ENCODE measurements at regions of chr7 and their contacts with region 1.

Region 1: DNA sequence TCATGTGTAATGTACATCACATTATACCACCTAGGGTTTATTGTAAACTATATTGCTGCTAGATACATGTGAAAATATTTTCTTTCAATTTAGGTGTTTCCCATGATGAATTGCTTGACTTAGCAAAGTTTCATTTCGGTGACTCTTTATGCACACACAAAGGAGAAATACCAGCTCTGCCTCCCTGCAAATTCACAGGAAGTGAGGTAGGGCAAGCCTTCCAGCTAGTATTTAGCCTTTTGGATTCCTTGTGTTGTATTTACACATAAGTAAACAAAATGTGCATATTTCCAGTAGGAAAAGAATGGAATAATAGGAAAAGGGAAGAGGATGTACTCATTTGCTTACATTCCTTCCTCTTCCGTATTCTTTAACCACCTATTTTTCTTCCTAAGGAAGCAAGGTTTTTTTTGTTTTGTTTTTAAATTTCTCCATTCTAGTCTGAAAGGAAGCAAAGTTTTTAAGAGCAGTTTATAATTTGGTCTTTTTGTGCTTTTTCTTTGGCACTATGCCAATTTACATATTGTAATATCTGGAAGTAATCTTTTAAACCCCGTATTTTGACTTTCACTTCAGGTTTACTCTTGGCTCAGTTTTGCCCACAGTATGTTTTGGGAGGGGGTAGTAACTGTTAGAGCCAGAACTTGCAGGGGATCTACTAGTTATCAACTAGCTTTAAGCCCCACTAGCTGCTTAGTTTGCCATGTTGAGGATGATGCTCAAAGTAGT is 10.4 kb downstream of the PMPCB start:
- DNase-seq: no peak
- ATAC-seq: peak; percentile 72
- H3K4me3 Mint-ChIP-seq: no peak overlapping the region
- H3K27ac Mint-ChIP-seq: peak overlapping the region; percentile 37
- H3K4me1 Mint-ChIP-seq: peaks cover 26% of the 10 kb centered on the region
- H3K27me3 Mint-ChIP-seq: no peaks in the 10 kb centered on the region

Region 2: DNA sequence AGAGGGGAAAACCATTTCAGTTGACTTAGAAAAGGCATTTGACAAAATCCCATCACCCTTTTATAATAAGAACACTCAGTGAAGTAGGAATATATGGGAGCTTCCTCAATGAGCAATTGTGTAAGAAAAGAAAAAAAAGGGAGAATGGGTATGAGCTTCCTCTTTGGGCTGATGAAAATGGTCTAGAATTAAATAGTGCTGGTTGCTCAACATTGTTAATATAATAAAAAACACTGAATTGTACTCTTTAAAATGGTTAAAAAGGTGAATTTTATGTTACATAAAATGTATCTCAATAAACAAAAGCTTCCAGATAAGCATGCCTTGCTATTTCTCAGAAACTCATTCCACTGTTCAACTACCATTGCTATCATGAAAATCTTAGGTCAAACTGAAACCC is 354.3 kb before region 1 on chr7:
- CTCF ChIA-PET with region 1: no interaction called
- POLR2A ChIA-PET with region 1: no interaction called
- intact Hi-C with region 1: no loop called
- DNase-seq: no peak
- ATAC-seq: no peak
- H3K4me3 Mint-ChIP-seq: no peak overlapping the region
- H3K27ac Mint-ChIP-seq: no peak overlapping the region
- H3K4me1 Mint-ChIP-seq: no peaks in the 10 kb centered on the region
- H3K27me3 Mint-ChIP-seq: peaks cover 4% of the 10 kb centered on the region

Region 3: GRCh38 chr7:103325744-103326143 is 18.1 kb after region 1 on chr7:
- CTCF ChIA-PET with region 1: interaction called, 5 read pairs
- POLR2A ChIA-PET with region 1: interaction called, 8 read pairs
- intact Hi-C with region 1: loop called in 1 of 2 experiments (anchors 2 kb)
- DNase-seq: peak; percentile 18
- ATAC-seq: peak; percentile 93
- H3K4me3 Mint-ChIP-seq: no peak overlapping the region
- H3K27ac Mint-ChIP-seq: peak overlapping the region; percentile 86
- H3K4me1 Mint-ChIP-seq: peaks cover 23% of the 10 kb centered on the region
- H3K27me3 Mint-ChIP-seq: no peaks in the 10 kb centered on the region

Region 4: DNA sequence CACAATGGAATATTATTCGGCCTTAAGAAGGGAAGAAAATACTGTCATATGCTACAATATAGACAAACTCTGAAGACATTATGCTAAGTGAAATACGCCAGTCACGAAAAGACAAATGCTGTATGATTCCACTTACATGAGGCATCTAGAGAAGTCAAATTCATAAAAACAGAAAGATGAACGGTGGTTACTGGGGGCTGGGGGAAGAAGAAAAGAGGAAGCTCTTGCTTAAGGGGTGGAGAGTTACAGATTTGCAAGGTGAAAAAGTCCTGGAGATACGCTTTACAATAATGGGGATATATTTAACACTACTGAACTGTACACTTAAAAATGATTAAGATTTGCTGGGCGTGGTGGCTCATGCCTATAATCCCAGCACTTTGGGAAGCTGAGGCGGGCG is 88.8 kb after region 1 on chr7:
- CTCF ChIA-PET with region 1: no interaction called
- POLR2A ChIA-PET with region 1: no interaction called
- intact Hi-C with region 1: no loop called
- DNase-seq: no peak
- ATAC-seq: no peak
- H3K4me3 Mint-ChIP-seq: no peak overlapping the region
- H3K27ac Mint-ChIP-seq: no peak overlapping the region
- H3K4me1 Mint-ChIP-seq: no peaks in the 10 kb centered on the region
- H3K27me3 Mint-ChIP-seq: peaks cover 3% of the 10 kb centered on the region

Measured in activated CD4-positive, alpha-beta T cell treated with anti-CD3 and anti-CD28 coated beads for 36 hours (primary cell).